ENCODE measurements at regions of chr19 and their contacts with region 1.

Region 1: DNA sequence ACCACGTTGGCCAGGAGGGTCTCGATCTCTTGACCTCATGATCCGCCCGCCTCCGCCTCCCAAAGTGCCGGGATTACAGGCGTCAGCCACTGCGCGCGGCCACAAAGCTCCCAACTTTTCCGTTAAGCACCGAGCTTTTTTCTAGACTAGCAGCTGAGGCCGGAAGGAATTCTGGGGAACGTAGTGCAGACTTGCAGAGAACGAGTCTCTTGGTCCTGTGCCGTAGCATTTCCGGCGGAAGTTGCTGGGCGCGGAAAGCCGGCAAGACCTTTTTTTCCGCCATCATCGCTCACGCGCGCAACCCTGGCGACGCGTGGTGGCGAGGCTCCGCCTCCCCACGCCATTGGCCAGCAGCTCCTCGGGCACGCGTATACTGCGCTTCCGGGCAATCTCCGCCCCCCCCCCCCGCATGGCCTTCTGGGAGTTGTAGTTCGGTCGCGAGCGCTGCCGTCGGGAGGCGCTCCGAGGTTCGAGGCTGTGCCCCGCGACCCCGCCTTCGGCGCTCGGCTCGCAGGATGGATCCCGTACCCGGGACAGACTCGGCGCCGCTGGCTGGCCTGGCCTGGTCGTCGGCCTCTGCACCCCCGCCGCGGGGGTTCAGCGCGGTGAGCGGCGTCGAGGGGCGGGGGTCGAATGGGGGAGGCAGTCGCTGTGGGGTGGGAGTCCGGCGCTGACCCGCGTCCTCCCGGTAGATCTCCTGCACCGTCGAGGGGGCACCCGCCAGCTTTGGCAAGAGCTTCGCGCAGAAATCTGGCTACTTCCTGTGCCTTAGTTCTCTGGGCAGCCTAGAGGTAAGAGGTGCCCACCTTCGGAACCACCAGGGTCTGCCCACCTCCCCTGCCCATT is at the start of gene MVB12A:
- DNase-seq: peak; percentile 98
- H3K4me3 Mint-ChIP-seq: peak within 1 kb of the TSS; percentile 87
- H3K27ac Mint-ChIP-seq: peak within 1 kb of the TSS; percentile 87
- H3K4me1 Mint-ChIP-seq: peaks cover 16% of the 10 kb centered on the region
- H3K27me3 Mint-ChIP-seq: no peaks in the 10 kb centered on the region
- total RNA-seq, gene MVB12A: 29.3 to 32.1 TPM

Region 2: DNA sequence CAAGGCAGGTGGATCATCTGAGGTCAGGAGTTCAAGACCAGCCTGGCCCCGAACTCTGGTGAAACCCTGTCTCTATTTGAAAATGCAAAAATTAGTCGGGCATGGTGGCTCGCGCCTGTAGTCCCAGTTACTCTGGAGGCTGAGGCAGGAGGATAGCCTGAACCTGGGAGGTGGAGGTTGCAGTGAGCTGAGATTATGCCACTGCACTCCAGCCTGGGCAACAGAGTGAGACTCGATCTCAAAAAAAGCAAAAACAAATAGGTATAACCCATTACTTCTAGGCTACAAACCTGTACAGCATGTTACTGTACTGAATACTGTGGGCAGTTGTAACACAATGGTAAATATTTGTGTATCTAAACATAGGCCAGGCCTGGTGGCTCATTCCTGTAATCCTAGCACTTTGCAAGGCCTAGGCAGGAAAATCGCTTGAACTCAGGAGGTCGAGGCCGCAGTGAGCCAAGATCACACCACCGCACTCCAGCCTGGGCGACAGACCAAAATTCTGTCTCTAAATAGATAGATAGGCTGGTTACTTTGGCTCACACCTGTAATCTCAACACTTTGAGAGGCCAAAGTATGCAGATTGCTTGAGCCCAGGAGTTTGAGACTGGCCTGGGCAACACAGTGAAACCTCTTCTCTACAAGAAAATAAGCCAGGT is 280.8 kb before region 1 on chr19:
- CTCF ChIA-PET with region 1: no interaction called
- intact Hi-C with region 1: no loop called
- DNase-seq: no peak
- H3K4me3 Mint-ChIP-seq: no peak overlapping the region
- H3K27ac Mint-ChIP-seq: no peak overlapping the region
- H3K4me1 Mint-ChIP-seq: peaks cover 12% of the 10 kb centered on the region
- H3K27me3 Mint-ChIP-seq: no peaks in the 10 kb centered on the region

Region 3: GRCh38 chr19:17405250-17406038 is 14.4 kb before region 1 on chr19 and contains the start of gene BST2:
- CTCF ChIA-PET with region 1: interaction called, 4 read pairs
- intact Hi-C with region 1: loop called (anchors 1 kb)
- DNase-seq: peak; percentile 69
- H3K4me3 Mint-ChIP-seq: peak within 1 kb of the TSS; percentile 80
- H3K27ac Mint-ChIP-seq: peak within 1 kb of the TSS; percentile 94
- H3K4me1 Mint-ChIP-seq: peaks cover 33% of the 10 kb centered on the region
- H3K27me3 Mint-ChIP-seq: no peaks in the 10 kb centered on the region
- total RNA-seq, gene BST2: 117 to 121 TPM

Region 4: DNA sequence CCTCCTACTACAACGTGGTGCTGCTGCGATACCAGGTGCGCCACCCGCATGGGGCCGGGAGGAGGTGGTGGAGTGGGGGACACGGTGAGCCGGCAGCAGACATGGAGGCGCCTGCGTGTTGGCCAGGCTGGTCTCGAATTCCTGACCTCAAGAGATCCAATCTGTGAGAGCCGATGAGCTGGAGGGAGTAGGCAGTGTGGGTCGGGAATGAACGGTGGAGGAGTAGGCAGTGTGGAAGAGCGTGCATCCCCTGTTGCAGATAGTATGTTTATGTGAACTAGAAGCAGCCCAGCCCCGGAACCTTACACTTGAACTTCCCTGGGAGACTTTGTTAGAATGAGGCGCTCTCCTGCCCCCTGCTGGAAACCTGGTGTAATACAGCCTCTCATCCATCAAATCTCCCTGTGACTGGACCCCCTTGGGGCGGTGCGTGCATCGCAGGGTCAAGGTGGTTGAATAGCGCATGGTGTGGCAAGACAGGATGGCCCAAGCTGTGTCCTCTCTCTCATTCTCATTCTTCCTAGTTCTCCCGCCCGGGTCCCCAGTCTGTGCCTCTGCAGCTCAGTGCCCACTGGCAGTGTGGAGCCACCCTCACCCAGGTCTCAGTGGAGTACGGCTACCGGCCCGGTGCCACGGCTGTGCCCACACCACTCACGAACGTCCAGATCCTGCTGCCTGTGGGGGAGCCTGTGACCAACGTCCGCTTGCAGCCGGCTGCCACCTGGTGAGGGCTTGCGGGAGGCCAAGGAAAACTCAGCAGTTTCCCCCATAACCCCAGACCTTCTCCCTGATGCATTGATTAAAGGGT is 364.6 kb after region 1 on chr19:
- CTCF ChIA-PET with region 1: no interaction called
- intact Hi-C with region 1: no loop called
- DNase-seq: peak; percentile 88
- H3K4me3 Mint-ChIP-seq: no peak overlapping the region
- H3K27ac Mint-ChIP-seq: no peak overlapping the region
- H3K4me1 Mint-ChIP-seq: peaks cover 12% of the 10 kb centered on the region
- H3K27me3 Mint-ChIP-seq: no peaks in the 10 kb centered on the region